ENCODE measurements at regions of chr20 and their contacts with region 1.

Region 1: DNA sequence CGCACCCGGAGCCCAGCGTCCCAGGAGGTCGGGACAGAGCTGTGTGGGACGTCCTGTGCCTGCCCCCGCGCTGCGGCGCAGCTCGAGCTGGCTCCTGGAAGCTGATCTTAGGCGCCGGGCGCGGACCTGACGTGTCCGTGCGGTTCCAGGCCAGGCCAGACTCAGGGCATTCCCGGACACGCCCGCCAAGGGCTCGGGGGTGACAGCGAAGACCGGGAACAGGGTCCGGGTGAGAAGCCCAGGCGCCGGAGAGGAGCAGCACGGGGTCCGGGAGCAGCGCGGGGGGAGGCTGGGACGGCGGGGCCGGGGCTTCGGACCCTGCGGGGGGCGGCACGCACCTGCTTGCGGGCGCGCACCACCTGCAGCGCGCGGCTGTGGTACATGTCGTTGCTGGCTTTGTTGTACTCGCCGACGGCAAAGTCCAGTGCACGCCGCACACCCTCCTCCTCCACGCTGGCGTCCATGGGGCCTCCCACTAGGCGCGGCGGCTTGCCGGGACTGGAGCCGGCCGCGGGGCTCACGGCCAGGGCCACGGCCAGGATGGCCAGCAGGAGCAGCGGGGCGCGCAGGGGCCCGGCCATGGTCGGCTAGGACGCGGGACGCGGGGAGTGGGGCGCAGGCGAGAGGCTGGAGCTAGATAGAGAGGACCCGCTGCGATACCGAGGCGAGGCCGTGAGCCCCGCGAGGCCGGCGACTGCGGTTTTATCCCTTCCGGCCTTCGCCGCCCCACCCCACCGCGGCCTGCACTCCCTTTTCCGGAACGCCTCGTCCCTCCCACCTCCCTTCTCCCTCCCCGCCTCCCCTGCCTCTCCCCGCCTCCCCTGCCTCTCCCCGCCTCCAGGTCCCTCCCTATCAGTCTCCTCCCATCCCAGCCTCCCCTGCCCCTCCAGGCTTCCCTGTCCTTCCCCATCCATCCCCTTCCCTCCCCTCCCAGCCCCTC is at the start of gene CST3:
- DNase-seq: peak; percentile 89 to 92 (median 91)
- ATAC-seq: peak; percentile 93
- H3K4me3 ChIP-seq: peak within 1 kb of the TSS; percentile 74
- H3K27ac ChIP-seq: peak within 1 kb of the TSS; percentile 92
- H3K4me1 ChIP-seq: peaks cover 6 to 23% of the 10 kb centered on the region in 2 experiments; a peak in 4 of 5 replicates
- H3K27me3 ChIP-seq: no peaks in the 10 kb centered on the region
- CTCF ChIP-seq: no peak
- EP300 ChIP-seq: no peak
- POLR2A ChIP-seq: peak; percentile 85
- RAD21 ChIP-seq: no peak
- polyA plus RNA-seq, gene CST3: 8.7 to 12.4 TPM

Region 2: DNA sequence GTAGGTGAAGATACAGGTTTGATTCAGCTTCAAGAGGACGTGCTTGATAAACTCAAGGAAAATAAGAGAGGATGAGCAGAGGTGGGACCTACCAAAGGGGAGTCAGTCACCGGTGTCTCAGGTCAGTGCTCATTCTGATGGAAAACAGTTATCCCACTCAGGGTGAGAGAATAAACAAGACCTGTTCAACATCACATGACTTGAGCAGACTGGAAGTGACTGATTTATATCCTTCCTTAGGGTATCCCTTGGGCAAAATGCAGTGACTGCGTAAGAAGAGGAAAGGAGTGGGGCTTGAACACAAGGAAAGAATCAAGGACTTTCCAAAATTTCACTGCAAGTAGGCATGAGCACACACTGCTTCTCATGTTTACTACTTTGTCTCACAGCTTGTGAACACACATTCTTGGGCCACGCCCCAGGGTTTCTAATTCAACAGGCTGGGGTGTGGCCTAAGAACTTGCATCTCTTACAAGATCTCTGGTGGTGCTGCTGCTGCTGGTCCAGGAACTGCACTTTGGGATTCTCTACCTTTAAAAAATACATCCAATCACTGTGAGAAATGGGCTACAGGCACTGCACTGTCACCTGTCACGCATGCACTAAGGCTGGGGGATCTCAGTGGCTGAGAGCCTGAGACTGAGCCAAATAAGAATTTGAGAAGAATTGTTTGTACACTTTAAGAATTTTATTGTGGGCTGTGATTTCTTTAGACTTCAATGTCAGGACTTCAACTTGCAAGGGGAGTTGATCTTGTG is 11.3 kb before region 1 on chr20:
- CTCF ChIA-PET with region 1: no interaction called
- POLR2A ChIA-PET with region 1: interaction called, 11 read pairs
- in situ Hi-C with region 1: no loop called
- intact Hi-C with region 1: no loop called
- DNase-seq: peak; percentile 15 to 44 (median 17)
- ATAC-seq: peak; percentile 85
- H3K4me3 ChIP-seq: no peak overlapping the region
- H3K27ac ChIP-seq: no peak overlapping the region
- H3K4me1 ChIP-seq: peaks cover 0 to 19% of the 10 kb centered on the region in 2 experiments; a peak in 2 of 5 replicates
- H3K27me3 ChIP-seq: no peaks in the 10 kb centered on the region
- CTCF ChIP-seq: no peak
- EP300 ChIP-seq: no peak
- POLR2A ChIP-seq: no peak
- RAD21 ChIP-seq: no peak

Region 3: GRCh38 chr20:24027229-24027628 is 389.7 kb after region 1 on chr20:
- CTCF ChIA-PET with region 1: no interaction called
- POLR2A ChIA-PET with region 1: no interaction called
- in situ Hi-C with region 1: no loop called
- intact Hi-C with region 1: no loop called
- DNase-seq: peak in 1 of 4 experiments; percentile 1
- ATAC-seq: no peak
- H3K4me3 ChIP-seq: no peak overlapping the region
- H3K27ac ChIP-seq: no peak overlapping the region
- H3K4me1 ChIP-seq: no peaks in the 10 kb centered on the region
- H3K27me3 ChIP-seq: no peaks in the 10 kb centered on the region
- CTCF ChIP-seq: no peak
- EP300 ChIP-seq: no peak
- POLR2A ChIP-seq: no peak
- RAD21 ChIP-seq: no peak